ENCODE measurements at regions of chr15 and their contacts with region 1.

Region 1: GRCh38 chr15:71386448-71387236 is 271.4 kb downstream of the THSD4 start:
- DNase-seq: peak; percentile 38 to 61 (median 60)
- H3K4me3 ChIP-seq: no peak overlapping the region
- H3K27ac ChIP-seq: no peak overlapping the region
- H3K4me1 ChIP-seq: no peaks in the 10 kb centered on the region
- H3K27me3 ChIP-seq: peaks cover 10 to 31% (median 13%) of the 10 kb centered on the region in 5 experiments

Region 2: GRCh38 chr15:71353171-71353570 is 33.5 kb before region 1 on chr15:
- CTCF ChIA-PET with region 1: no interaction called
- POLR2A ChIA-PET with region 1: no interaction called
- DNase-seq: no peak
- H3K4me3 ChIP-seq: no peak overlapping the region
- H3K27ac ChIP-seq: no peak overlapping the region
- H3K4me1 ChIP-seq: no peaks in the 10 kb centered on the region
- H3K27me3 ChIP-seq: peaks cover 0 to 11% (median 2%) of the 10 kb centered on the region in 5 experiments

Region 3: DNA sequence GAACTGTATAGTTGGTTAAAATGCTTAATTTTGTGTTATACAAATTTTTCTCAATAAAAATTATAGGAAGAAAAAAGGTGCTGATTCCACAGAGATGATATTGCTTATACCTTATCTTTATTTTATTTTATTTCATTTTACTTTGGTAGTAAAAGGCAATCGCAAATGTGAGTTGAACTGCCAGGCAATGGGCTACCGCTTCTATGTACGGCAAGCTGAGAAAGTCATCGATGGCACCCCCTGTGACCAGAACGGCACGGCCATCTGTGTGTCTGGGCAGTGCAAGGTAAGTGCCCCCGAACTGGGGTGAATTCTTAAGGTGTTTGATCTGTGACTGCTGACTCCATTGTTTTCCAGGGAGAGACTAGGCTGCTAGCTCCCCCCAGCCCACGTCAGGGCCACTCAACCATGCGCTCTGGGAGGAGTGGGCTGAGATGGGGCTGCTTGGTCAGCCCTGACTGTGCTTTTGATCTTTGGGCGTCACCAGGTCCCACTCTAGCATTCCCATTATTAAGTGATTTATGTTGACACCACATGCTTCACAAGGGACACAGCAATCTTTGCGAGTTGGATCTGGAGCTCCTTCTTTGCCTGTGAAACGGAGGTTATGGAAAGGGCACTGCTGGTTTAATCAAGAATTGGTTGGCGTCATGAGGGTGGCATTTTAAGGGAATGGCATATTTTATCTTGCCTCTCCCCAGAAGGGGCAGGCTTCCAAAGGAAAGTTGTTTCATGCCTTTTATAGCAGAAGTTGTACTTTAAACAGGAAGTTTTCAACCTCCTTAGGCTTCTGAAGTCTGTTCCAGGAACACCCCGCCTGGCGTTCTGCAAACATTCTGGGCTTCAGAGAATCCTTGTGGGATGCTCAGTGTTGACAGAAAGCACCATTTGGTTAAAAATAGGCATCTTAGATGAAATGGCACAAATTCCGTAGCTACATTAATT is 25.2 kb after region 1 on chr15:
- CTCF ChIA-PET with region 1: interaction called, 15 read pairs
- POLR2A ChIA-PET with region 1: no interaction called
- DNase-seq: peak; percentile 9 to 19 (median 15)
- H3K4me3 ChIP-seq: peak overlapping the region in 1 of 7 experiments; percentile 23
- H3K27ac ChIP-seq: no peak overlapping the region
- H3K4me1 ChIP-seq: peaks cover 2 to 17% (median 7%) of the 10 kb centered on the region in 4 experiments
- H3K27me3 ChIP-seq: no peaks in the 10 kb centered on the region

Region 4: GRCh38 chr15:71443538-71443937 is 56.9 kb after region 1 on chr15:
- CTCF ChIA-PET with region 1: interaction called, 136 read pairs
- POLR2A ChIA-PET with region 1: no interaction called
- DNase-seq: peak; percentile 22 to 62 (median 54)
- H3K4me3 ChIP-seq: no peak overlapping the region
- H3K27ac ChIP-seq: no peak overlapping the region
- H3K4me1 ChIP-seq: peaks cover 0 to 1% (median 0%) of the 10 kb centered on the region in 4 experiments
- H3K27me3 ChIP-seq: peaks cover 0 to 6% (median 2%) of the 10 kb centered on the region in 5 experiments

Region 5: GRCh38 chr15:71611551-71612396 is 225.1 kb after region 1 on chr15:
- CTCF ChIA-PET with region 1: no interaction called
- POLR2A ChIA-PET with region 1: no interaction called
- DNase-seq: no peak
- H3K4me3 ChIP-seq: no peak overlapping the region
- H3K27ac ChIP-seq: no peak overlapping the region
- H3K4me1 ChIP-seq: no peaks in the 10 kb centered on the region
- H3K27me3 ChIP-seq: peaks cover 0 to 10% (median 3%) of the 10 kb centered on the region in 5 experiments